ENCODE measurements at regions of chr17 and their contacts with region 1.

Region 1: GRCh38 chr17:1374431-1375177 is 25.4 kb downstream of the YWHAE start:
- DNase-seq: no peak
- H3K4me3 Mint-ChIP-seq: peak overlapping the region; percentile 23
- H3K27ac Mint-ChIP-seq: peak overlapping the region; percentile 53
- H3K4me1 Mint-ChIP-seq: peaks cover 61% of the 10 kb centered on the region
- H3K27me3 Mint-ChIP-seq: no peaks in the 10 kb centered on the region

Region 2: DNA sequence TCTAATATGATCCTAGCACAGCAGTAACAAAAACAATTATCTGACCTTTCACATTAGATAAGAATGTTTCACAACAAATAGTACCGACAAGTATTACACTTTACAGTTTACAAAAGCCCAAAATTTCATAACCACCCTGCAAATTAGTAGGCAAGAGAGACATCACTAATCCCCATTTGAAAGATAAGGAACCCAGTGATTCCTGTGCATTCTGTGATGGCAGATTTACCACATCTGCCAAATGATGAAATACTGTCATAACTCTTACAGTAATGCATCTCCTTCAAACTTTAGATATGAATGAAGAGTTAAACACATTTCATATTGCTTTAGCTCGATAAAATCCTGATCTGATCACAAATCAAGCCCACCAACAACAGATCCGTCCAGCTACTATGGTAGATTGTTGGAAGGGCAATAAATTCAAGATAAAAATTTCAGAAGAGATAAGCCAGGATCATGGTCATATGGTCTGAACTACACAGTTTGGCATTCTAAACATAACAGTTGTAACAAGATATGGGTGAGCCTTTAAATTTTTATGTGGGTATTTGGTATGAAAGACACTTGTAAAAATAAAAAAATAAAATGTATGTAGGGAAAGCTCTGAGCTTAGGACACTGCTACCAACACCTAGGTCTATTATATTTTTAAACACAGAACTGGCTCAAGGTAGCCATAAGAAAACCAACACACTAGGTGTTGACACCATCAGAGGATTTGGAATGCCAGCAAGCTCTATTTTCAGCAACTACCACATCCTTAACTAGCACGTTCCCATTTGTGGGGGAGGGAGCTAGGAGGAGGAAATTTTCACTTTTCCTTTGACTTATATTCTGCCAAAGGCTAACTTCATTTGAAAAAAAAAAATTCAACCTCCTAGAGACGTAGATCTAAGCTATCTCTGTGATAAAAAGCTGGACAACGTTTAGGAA is 16.1 kb after region 1 on chr17:
- intact Hi-C with region 1: loop called (anchors 2 kb)
- DNase-seq: no peak
- H3K4me3 Mint-ChIP-seq: no peak overlapping the region
- H3K27ac Mint-ChIP-seq: no peak overlapping the region
- H3K4me1 Mint-ChIP-seq: peaks cover 54% of the 10 kb centered on the region
- H3K27me3 Mint-ChIP-seq: no peaks in the 10 kb centered on the region